ENCODE measurements at regions of chr11 and their contacts with region 1.

Region 1: DNA sequence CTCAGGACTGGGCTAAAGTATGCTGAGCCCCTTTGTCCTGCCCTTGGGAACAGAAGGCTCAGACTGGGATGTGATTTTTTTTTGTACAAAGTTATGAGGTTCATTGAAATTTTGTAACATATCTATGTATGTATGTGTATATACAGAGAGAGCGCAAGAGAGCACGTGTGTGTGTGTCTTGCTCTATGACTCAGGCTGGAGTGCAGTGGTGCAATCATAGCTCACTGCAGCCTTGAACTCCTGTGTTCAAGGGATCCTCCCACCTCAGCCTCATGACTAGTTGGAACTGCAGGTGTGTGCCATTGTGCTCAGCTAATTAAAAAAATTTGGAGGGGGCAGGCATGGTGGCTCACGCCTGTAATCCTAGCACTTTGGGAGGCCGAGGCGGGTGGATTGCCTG is 5.7 kb downstream of the TMEM25 start:
- DNase-seq: no peak
- ATAC-seq: no peak
- H3K4me3 ChIP-seq: no peak overlapping the region
- H3K4me3 Mint-ChIP-seq: no peak overlapping the region
- H3K27ac ChIP-seq: no peak overlapping the region
- H3K27ac Mint-ChIP-seq: no peak overlapping the region
- H3K4me1 ChIP-seq: peaks cover 0 to 4% of the 10 kb centered on the region in 2 experiments
- H3K4me1 Mint-ChIP-seq: peaks cover 3 to 7% (median 6%) of the 10 kb centered on the region in 3 donors
- H3K27me3 ChIP-seq: no peaks in the 10 kb centered on the region
- H3K27me3 Mint-ChIP-seq: no peaks in the 10 kb centered on the region

Region 2: DNA sequence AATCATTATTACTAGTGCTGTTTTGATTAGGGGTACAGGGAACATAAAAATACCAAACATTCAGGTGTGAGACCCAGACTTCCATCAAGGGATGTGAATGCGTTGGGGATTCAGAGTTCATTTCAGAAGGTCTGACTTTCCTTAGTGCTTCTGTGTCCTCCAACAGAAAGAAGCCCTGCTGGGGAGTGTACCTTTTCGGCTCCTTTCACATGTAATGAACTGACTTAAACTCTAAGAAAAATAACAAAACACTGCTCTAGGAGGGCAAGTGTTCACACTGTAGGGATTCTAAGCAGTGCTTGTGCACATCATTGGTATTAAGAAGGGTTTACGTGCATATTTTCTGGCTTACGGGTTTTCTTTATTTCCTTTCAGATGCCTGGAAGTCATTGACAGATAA is 25.1 kb before region 1 on chr11:
- CTCF ChIA-PET with region 1: no interaction called
- POLR2A ChIA-PET with region 1: no interaction called
- DNase-seq: no peak
- ATAC-seq: no peak
- H3K4me3 ChIP-seq: no peak overlapping the region
- H3K4me3 Mint-ChIP-seq: no peak overlapping the region
- H3K27ac ChIP-seq: no peak overlapping the region
- H3K27ac Mint-ChIP-seq: no peak overlapping the region
- H3K4me1 ChIP-seq: peaks cover 0 to 7% of the 10 kb centered on the region in 2 experiments
- H3K4me1 Mint-ChIP-seq: peaks cover 9 to 10% (median 10%) of the 10 kb centered on the region in 3 donors
- H3K27me3 ChIP-seq: no peaks in the 10 kb centered on the region
- H3K27me3 Mint-ChIP-seq: no peaks in the 10 kb centered on the region

Region 3: GRCh38 chr11:118524757-118525470 is 11.8 kb before region 1 on chr11:
- CTCF ChIA-PET with region 1: no interaction called
- POLR2A ChIA-PET with region 1: no interaction called
- DNase-seq: no peak
- ATAC-seq: no peak
- H3K4me3 ChIP-seq: no peak overlapping the region
- H3K4me3 Mint-ChIP-seq: no peak overlapping the region
- H3K27ac ChIP-seq: no peak overlapping the region
- H3K27ac Mint-ChIP-seq: peak overlapping the region in 1 of 2 donors; percentile 60
- H3K4me1 ChIP-seq: peaks cover 0 to 13% of the 10 kb centered on the region in 2 experiments
- H3K4me1 Mint-ChIP-seq: peaks cover 20 to 33% (median 27%) of the 10 kb centered on the region in 3 donors
- H3K27me3 ChIP-seq: no peaks in the 10 kb centered on the region
- H3K27me3 Mint-ChIP-seq: no peaks in the 10 kb centered on the region

Region 4: DNA sequence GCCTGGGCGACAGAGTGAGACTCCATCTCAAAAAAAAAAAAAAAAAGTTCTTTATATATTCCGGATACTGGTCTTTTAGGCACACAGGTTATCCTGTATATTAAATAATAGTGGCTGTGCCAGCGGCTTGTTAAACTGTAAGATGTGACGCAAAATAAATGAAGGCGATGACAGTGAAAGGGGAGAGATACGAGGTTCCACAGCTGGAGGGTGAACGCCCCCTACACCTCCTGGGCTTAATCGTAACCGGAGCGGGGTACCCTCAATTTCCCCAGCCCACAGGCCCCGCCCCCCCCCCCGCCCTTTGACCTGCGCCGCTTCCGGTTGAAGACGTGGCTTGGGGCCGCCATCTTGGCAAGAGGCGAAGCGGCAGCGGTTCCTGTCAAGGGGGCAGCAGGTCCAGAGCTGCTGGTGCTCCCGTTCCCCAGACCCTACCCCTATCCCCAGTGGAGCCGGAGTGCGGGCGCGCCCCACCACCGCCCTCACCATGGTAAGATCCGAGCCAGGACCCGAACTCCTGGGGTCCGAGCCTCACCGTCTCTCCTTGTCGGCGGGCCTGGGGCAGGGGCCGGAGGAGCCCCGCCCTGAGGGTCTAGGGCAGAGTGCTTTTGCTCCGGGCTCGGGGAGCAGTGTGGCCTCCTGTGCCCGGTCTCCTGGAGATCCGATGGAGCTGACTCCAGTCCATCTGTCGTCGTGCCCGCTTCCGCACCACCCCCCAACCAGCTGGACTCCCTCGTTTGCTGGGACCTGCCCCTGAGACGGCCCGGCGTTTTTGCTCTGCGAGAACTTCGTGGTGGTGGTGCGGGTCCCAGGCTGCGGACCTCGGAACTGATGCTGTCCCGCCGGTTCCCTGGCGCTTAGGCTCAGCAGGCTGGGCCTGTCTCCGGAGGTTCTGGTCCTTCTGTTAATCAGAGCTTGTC is 35.6 kb after region 1 on chr11 and contains the start of gene ARCN1:
- CTCF ChIA-PET with region 1: interaction called in 1 of 2 experiments, 11 read pairs
- POLR2A ChIA-PET with region 1: no interaction called
- DNase-seq: peak; percentile 63 to 88 (median 74)
- ATAC-seq: peak; percentile 86 to 90 (median 86)
- H3K4me3 ChIP-seq: peak within 1 kb of the TSS; percentile 97 to 100
- H3K4me3 Mint-ChIP-seq: peak within 1 kb of the TSS; percentile 90 to 96 (median 93)
- H3K27ac ChIP-seq: peak within 1 kb of the TSS; percentile 99
- H3K27ac Mint-ChIP-seq: peak within 1 kb of the TSS; percentile 95 to 97
- H3K4me1 ChIP-seq: peaks cover 20 to 22% of the 10 kb centered on the region in 2 experiments
- H3K4me1 Mint-ChIP-seq: peaks cover 50 to 52% (median 51%) of the 10 kb centered on the region in 3 donors
- H3K27me3 ChIP-seq: no peaks in the 10 kb centered on the region
- H3K27me3 Mint-ChIP-seq: no peaks in the 10 kb centered on the region
- total RNA-seq, gene ARCN1: 80.6 to 117 (median 111) TPM

Measured in T-cell (primary cell).